CD8-positive, alpha-beta T cell (primary cell): ENCODE measurements at regions of chr15 and their contacts with region 1.

Region 1: GRCh38 chr15:90482124-90483011 is 47.4 kb upstream of the CRTC3 start:
- DNase-seq: peak in 8 of 9 experiments; percentile 10 to 67 (median 49)
- ATAC-seq: peak; percentile 67
- H3K4me3 ChIP-seq: no peak overlapping the region
- H3K4me3 Mint-ChIP-seq: no peak overlapping the region
- H3K27ac ChIP-seq: no peak overlapping the region
- H3K27ac Mint-ChIP-seq: no peak overlapping the region
- H3K4me1 ChIP-seq: peaks cover 12% of the 10 kb centered on the region
- H3K4me1 Mint-ChIP-seq: peaks cover 24% of the 10 kb centered on the region
- H3K27me3 ChIP-seq: no peaks in the 10 kb centered on the region
- H3K27me3 Mint-ChIP-seq: no peaks in the 10 kb centered on the region
- CTCF ChIP-seq: peak; percentile 84

Region 2: GRCh38 chr15:90439946-90440345 is 42.4 kb before region 1 on chr15:
- CTCF ChIA-PET with region 1: interaction called, 10 read pairs
- POLR2A ChIA-PET with region 1: no interaction called
- intact Hi-C with region 1: no loop called
- DNase-seq: no peak
- ATAC-seq: no peak
- H3K4me3 ChIP-seq: no peak overlapping the region
- H3K4me3 Mint-ChIP-seq: no peak overlapping the region
- H3K27ac ChIP-seq: no peak overlapping the region
- H3K27ac Mint-ChIP-seq: peak overlapping the region; percentile 43
- H3K4me1 ChIP-seq: no peaks in the 10 kb centered on the region
- H3K4me1 Mint-ChIP-seq: peaks cover 21% of the 10 kb centered on the region
- H3K27me3 ChIP-seq: no peaks in the 10 kb centered on the region
- H3K27me3 Mint-ChIP-seq: no peaks in the 10 kb centered on the region
- CTCF ChIP-seq: no peak

Region 3: GRCh38 chr15:90451053-90451850 is 31.1 kb before region 1 on chr15:
- CTCF ChIA-PET with region 1: interaction called, 10 read pairs
- POLR2A ChIA-PET with region 1: no interaction called
- intact Hi-C with region 1: no loop called
- DNase-seq: no peak
- ATAC-seq: no peak
- H3K4me3 ChIP-seq: no peak overlapping the region
- H3K4me3 Mint-ChIP-seq: no peak overlapping the region
- H3K27ac ChIP-seq: no peak overlapping the region
- H3K27ac Mint-ChIP-seq: no peak overlapping the region
- H3K4me1 ChIP-seq: no peaks in the 10 kb centered on the region
- H3K4me1 Mint-ChIP-seq: peaks cover 4% of the 10 kb centered on the region
- H3K27me3 ChIP-seq: no peaks in the 10 kb centered on the region
- H3K27me3 Mint-ChIP-seq: no peaks in the 10 kb centered on the region
- CTCF ChIP-seq: no peak

Region 4: DNA sequence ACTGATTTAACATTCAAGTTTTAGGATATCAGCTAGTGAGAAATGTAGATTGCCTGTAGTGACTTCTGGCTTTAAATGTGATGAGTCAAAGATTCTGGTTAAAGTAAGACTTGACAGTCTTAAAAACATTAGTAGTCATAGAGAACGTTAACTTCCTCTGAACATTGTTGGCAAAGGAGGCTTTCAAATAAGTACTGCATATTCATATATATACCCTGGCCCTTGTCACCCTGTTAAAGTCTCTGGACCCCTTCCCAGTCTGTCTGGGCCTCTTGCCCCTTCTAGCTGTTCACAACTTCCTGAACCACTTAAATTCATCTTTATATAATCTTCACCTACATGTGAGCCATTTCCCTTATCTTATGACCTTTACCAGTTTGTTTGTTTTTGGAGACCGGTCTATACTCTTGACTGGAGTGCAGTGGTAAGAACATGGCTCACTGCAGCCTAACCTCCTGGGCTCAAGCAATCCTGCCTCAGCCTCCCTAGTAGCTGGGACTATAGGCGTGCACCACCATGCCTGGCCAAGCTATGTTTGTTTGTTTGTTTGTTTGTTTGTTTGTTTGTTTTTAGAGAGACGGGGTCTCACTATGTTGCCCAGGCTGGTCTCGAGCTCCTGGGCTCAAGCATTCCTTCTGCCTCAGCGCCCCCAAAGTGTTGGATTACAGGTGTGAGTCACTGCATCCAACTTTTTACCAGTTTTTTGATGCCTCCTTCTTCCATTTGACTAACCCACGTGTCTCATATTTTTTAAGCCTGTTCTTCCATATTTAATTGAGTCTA is 17.0 kb before region 1 on chr15:
- CTCF ChIA-PET with region 1: interaction called, 25 read pairs
- POLR2A ChIA-PET with region 1: interaction called, 3 read pairs
- intact Hi-C with region 1: no loop called
- DNase-seq: no peak
- ATAC-seq: no peak
- H3K4me3 ChIP-seq: no peak overlapping the region
- H3K4me3 Mint-ChIP-seq: no peak overlapping the region
- H3K27ac ChIP-seq: no peak overlapping the region
- H3K27ac Mint-ChIP-seq: no peak overlapping the region
- H3K4me1 ChIP-seq: no peaks in the 10 kb centered on the region
- H3K4me1 Mint-ChIP-seq: peaks cover 8% of the 10 kb centered on the region
- H3K27me3 ChIP-seq: no peaks in the 10 kb centered on the region
- H3K27me3 Mint-ChIP-seq: no peaks in the 10 kb centered on the region
- CTCF ChIP-seq: no peak

Region 5: GRCh38 chr15:90560229-90560776 is 77.9 kb after region 1 on chr15:
- CTCF ChIA-PET with region 1: no interaction called
- POLR2A ChIA-PET with region 1: no interaction called
- intact Hi-C with region 1: no loop called
- DNase-seq: no peak
- ATAC-seq: no peak
- H3K4me3 ChIP-seq: no peak overlapping the region
- H3K4me3 Mint-ChIP-seq: no peak overlapping the region
- H3K27ac ChIP-seq: no peak overlapping the region
- H3K27ac Mint-ChIP-seq: peak overlapping the region; percentile 94
- H3K4me1 ChIP-seq: peaks cover 81% of the 10 kb centered on the region
- H3K4me1 Mint-ChIP-seq: peaks cover 81% of the 10 kb centered on the region
- H3K27me3 ChIP-seq: no peaks in the 10 kb centered on the region
- H3K27me3 Mint-ChIP-seq: no peaks in the 10 kb centered on the region
- CTCF ChIP-seq: no peak

Region 6: DNA sequence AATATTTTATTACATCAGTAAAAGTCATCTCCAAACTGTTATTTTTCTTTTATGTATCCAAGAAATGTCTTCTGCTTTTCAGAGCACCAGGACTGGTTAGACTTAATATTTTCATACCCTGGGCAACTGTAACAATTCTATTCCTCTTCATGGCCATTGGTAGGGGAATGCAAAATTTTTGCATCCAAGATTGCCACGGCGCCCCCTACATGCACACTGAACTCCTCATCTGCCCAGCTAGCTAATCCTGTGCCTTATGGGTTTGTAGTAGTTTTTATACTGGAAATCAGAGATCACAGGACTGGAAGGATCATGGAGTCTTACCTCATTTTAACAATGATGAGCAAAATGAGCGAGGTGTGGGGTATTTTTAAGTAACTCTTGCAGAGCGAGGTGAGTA is 121.5 kb after region 1 on chr15:
- CTCF ChIA-PET with region 1: interaction called, 14 read pairs
- POLR2A ChIA-PET with region 1: no interaction called
- intact Hi-C with region 1: no loop called
- DNase-seq: peak; percentile 12 to 75 (median 53)
- ATAC-seq: no peak
- H3K4me3 ChIP-seq: no peak overlapping the region
- H3K4me3 Mint-ChIP-seq: no peak overlapping the region
- H3K27ac ChIP-seq: no peak overlapping the region
- H3K27ac Mint-ChIP-seq: peak overlapping the region; percentile 17
- H3K4me1 ChIP-seq: peaks cover 28% of the 10 kb centered on the region
- H3K4me1 Mint-ChIP-seq: peaks cover 46% of the 10 kb centered on the region
- H3K27me3 ChIP-seq: no peaks in the 10 kb centered on the region
- H3K27me3 Mint-ChIP-seq: no peaks in the 10 kb centered on the region
- CTCF ChIP-seq: peak; percentile 45

Region 7: GRCh38 chr15:90660195-90660998 is 178.0 kb after region 1 on chr15:
- CTCF ChIA-PET with region 1: no interaction called
- POLR2A ChIA-PET with region 1: no interaction called
- intact Hi-C with region 1: no loop called
- DNase-seq: peak in 8 of 9 experiments; percentile 51 to 75 (median 72)
- ATAC-seq: peak; percentile 83
- H3K4me3 ChIP-seq: peak overlapping the region; percentile 32 to 70
- H3K4me3 Mint-ChIP-seq: peak overlapping the region; percentile 70
- H3K27ac ChIP-seq: no peak overlapping the region
- H3K27ac Mint-ChIP-seq: no peak overlapping the region
- H3K4me1 ChIP-seq: peaks cover 75% of the 10 kb centered on the region
- H3K4me1 Mint-ChIP-seq: peaks cover 83% of the 10 kb centered on the region
- H3K27me3 ChIP-seq: peaks cover 0 to 26% of the 10 kb centered on the region in 2 experiments
- H3K27me3 Mint-ChIP-seq: peaks cover 9% of the 10 kb centered on the region
- CTCF ChIP-seq: no peak

Region 8: GRCh38 chr15:90845201-90845949 is 363.0 kb after region 1 on chr15:
- CTCF ChIA-PET with region 1: no interaction called
- POLR2A ChIA-PET with region 1: no interaction called
- intact Hi-C with region 1: no loop called
- DNase-seq: peak in 1 of 9 experiments; percentile 40
- ATAC-seq: peak; percentile 49
- H3K4me3 ChIP-seq: no peak overlapping the region
- H3K4me3 Mint-ChIP-seq: no peak overlapping the region
- H3K27ac ChIP-seq: no peak overlapping the region
- H3K27ac Mint-ChIP-seq: no peak overlapping the region
- H3K4me1 ChIP-seq: peaks cover 7% of the 10 kb centered on the region
- H3K4me1 Mint-ChIP-seq: no peaks in the 10 kb centered on the region
- H3K27me3 ChIP-seq: no peaks in the 10 kb centered on the region
- H3K27me3 Mint-ChIP-seq: no peaks in the 10 kb centered on the region
- CTCF ChIP-seq: no peak

Region 9: GRCh38 chr15:91182101-91182500 is 699.7 kb after region 1 on chr15:
- CTCF ChIA-PET with region 1: no interaction called
- POLR2A ChIA-PET with region 1: no interaction called
- intact Hi-C with region 1: no loop called
- DNase-seq: no peak
- ATAC-seq: no peak
- H3K4me3 ChIP-seq: no peak overlapping the region
- H3K4me3 Mint-ChIP-seq: no peak overlapping the region
- H3K27ac ChIP-seq: no peak overlapping the region
- H3K27ac Mint-ChIP-seq: no peak overlapping the region
- H3K4me1 ChIP-seq: no peaks in the 10 kb centered on the region
- H3K4me1 Mint-ChIP-seq: no peaks in the 10 kb centered on the region
- H3K27me3 ChIP-seq: no peaks in the 10 kb centered on the region
- H3K27me3 Mint-ChIP-seq: peaks cover 27% of the 10 kb centered on the region
- CTCF ChIP-seq: no peak